Panc1 (cell line): ENCODE measurements at regions of chr16 and their contacts with region 1.

Region 1: GRCh38 chr16:20849587-20850390 is 43.5 kb downstream of the REXO5 start:
- DNase-seq: peak; percentile 71
- ATAC-seq: peak; percentile 72; the same call in 1 of the 2 replicates
- H3K4me3 ChIP-seq: no peak overlapping the region
- H3K27ac ChIP-seq: peak overlapping the region; percentile 45; the same call in 1 of the 2 replicates
- H3K4me1 ChIP-seq: peaks cover 23% of the 10 kb centered on the region
- H3K27me3 ChIP-seq: no peaks in the 10 kb centered on the region
- CTCF ChIP-seq: peak; percentile 95

Region 2: GRCh38 chr16:19926449-19927390 is 923.1 kb before region 1 on chr16:
- CTCF ChIA-PET with region 1: no interaction called
- POLR2A ChIA-PET with region 1: no interaction called
- in situ Hi-C with region 1: no loop called
- intact Hi-C with region 1: no loop called
- DNase-seq: no peak
- ATAC-seq: no peak
- H3K4me3 ChIP-seq: no peak overlapping the region
- H3K27ac ChIP-seq: no peak overlapping the region
- H3K4me1 ChIP-seq: no peaks in the 10 kb centered on the region
- H3K27me3 ChIP-seq: peaks cover 3% of the 10 kb centered on the region; the same call in 1 of the 2 replicates
- CTCF ChIP-seq: no peak

Region 3: GRCh38 chr16:20883558-20884556 is 34.1 kb after region 1 on chr16:
- CTCF ChIA-PET with region 1: no interaction called
- POLR2A ChIA-PET with region 1: no interaction called
- in situ Hi-C with region 1: no loop called
- intact Hi-C with region 1: no loop called
- DNase-seq: no peak
- ATAC-seq: no peak
- H3K4me3 ChIP-seq: no peak overlapping the region
- H3K27ac ChIP-seq: no peak overlapping the region
- H3K4me1 ChIP-seq: peaks cover 15% of the 10 kb centered on the region
- H3K27me3 ChIP-seq: no peaks in the 10 kb centered on the region
- CTCF ChIP-seq: no peak

Region 4: DNA sequence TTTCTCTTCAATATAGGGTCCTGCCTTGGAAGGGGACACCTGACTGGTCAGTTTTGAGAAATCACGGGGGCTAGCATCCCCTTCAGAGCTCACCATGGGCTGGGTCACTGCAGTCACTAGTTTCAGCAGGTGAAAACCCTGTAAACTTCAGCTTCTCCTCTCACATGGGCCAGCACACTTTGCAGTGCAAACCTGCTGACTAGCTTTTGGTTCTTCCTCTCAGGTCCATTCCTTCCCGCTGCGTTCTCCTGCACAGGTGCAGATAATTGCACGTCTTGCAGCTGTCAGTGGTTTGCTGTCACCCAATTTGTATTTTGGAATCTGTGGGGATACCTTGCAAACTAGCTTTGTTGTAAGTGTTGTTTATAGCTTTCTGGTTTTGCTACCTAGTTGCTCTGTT is 145.9 kb after region 1 on chr16:
- CTCF ChIA-PET with region 1: no interaction called
- POLR2A ChIA-PET with region 1: no interaction called
- in situ Hi-C with region 1: loop called (anchors 10 kb)
- intact Hi-C with region 1: no loop called
- DNase-seq: no peak
- ATAC-seq: no peak
- H3K4me3 ChIP-seq: no peak overlapping the region
- H3K27ac ChIP-seq: no peak overlapping the region
- H3K4me1 ChIP-seq: no peaks in the 10 kb centered on the region
- H3K27me3 ChIP-seq: no peaks in the 10 kb centered on the region
- CTCF ChIP-seq: no peak

Region 5: DNA sequence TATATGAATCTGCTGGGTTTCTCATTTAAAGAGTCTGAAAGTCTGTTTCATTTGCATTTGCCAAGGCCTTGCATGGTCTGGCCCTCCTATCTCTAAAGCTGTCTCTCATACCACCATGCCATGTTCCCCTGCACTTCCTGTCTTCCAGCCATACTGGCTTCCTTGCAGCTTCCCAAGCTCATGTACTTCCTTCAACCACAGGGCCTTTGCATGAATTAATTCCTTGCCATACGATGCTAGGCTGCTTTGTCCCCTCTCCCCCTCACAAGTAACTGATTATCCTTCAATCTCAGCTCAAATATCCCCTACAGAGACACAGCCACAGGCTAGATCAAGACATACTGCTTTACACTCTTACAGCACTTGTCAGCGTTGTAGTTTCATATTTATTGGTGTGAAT is 422.5 kb after region 1 on chr16:
- CTCF ChIA-PET with region 1: interaction called, 10 read pairs
- POLR2A ChIA-PET with region 1: no interaction called
- in situ Hi-C with region 1: no loop called
- intact Hi-C with region 1: no loop called
- DNase-seq: no peak
- ATAC-seq: no peak
- H3K4me3 ChIP-seq: no peak overlapping the region
- H3K27ac ChIP-seq: no peak overlapping the region
- H3K4me1 ChIP-seq: no peaks in the 10 kb centered on the region
- H3K27me3 ChIP-seq: peaks cover 22% of the 10 kb centered on the region
- CTCF ChIP-seq: no peak